Prostate gland (tissue), 2 donors: ENCODE measurements at regions of chr10 and their contacts with region 1.

Region 1: GRCh38 chr10:13787015-13787421 is 200.3 kb downstream of the PRPF18 start:
- DNase-seq: no peak
- H3K4me3 ChIP-seq: no peak overlapping the region
- H3K27ac ChIP-seq: peak overlapping the region in 1 of 2 donors; percentile 30
- H3K4me1 ChIP-seq: no peaks in the 10 kb centered on the region
- H3K27me3 ChIP-seq: no peaks in the 10 kb centered on the region
- CTCF ChIP-seq: no peak
- POLR2A ChIP-seq: no peak

Region 2: DNA sequence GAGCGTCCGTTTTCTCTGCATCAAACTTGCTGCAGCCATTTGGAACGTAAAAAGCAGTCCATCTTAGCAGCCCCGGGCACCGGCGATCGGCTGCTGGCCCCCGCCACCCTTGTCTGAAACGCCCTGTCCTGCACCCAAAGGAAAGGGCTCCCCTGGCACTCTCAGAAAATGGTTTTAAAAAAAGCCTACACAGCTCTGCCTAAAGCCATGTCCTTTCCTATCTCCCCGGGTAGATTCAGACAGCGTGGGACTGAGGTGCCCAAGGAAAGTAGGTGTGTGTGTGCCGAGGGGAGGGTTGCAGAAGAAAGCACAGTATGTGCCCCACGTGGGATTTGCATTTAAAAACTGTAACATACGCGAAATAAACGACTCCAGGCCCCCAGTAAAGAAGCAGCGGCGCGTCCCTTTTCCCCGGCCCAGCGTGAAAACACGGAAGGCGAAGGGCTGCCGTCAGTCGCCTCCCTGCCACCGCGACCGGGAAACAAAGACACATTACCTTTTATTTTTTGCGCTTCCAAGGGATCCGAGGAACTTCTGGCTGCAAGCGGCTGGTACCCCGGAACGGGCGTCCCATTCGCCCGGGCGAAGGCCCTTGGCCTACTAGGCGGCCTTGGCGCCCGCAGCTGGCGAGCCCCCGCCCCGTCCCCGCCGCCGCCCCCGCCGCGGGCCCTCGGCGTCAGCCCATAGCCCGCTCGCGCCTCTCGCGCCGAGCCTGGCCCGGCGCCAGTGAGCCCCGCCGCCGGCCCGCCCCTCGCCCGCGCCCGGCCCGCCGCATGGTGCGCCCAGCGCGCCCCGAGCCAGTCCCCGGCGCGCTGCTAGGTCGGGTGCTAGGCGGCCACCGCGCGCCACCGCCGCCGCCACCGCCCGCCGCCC is 104.3 kb after region 1 on chr10:
- intact Hi-C with region 1: loop called (anchors 5 kb)
- DNase-seq: no peak
- H3K4me3 ChIP-seq: peak overlapping the region; percentile 40 to 42
- H3K27ac ChIP-seq: peak overlapping the region; percentile 35 to 61
- H3K4me1 ChIP-seq: no peaks in the 10 kb centered on the region
- H3K27me3 ChIP-seq: no peaks in the 10 kb centered on the region
- CTCF ChIP-seq: no peak
- POLR2A ChIP-seq: no peak

Region 3: GRCh38 chr10:13956826-13957225 is 169.8 kb after region 1 on chr10:
- intact Hi-C with region 1: loop called (anchors 2 kb)
- DNase-seq: peak; percentile 8
- H3K4me3 ChIP-seq: no peak overlapping the region
- H3K27ac ChIP-seq: peak overlapping the region; percentile 30 to 36
- H3K4me1 ChIP-seq: no peaks in the 10 kb centered on the region
- H3K27me3 ChIP-seq: no peaks in the 10 kb centered on the region
- CTCF ChIP-seq: peak in 2 of 4 experiments; percentile 11 to 51
- POLR2A ChIP-seq: no peak

Region 4: DNA sequence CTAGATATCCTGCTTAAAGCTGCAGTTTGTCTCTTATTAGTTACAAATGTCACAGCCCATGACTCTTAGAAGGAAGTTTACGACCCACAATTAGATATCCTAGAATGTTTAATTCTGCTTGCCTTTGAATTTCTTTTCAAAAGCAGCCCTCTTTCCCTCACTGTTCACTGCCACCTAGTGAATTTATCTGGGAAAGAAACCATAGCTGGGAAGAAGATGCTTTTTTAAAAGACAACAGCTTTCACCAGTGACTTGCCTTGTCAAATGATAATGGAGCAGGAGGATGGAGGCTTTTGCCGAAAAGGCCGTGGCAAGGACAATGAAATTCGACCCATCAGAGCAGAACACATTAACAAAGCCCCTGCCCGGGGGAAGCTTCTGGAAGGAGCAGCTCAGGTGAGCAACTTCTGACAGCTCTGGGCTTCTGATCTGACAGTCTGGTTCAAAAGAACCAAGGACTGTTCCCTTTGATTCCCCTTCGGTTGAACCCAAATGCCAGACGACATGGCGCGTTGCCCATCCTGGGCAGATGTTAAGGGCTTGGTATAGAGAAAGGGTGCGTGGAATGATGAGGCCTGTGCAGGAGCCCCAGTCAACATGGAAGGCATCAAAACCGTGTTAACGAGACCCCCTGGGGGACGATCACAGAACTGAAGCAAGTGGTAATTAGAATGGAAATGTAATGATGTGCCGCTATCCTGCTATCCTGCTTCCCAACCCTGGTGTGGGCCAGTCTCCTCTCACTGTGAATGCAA is 306.9 kb after region 1 on chr10:
- intact Hi-C with region 1: loop called (anchors 2 kb)
- DNase-seq: no peak
- H3K4me3 ChIP-seq: no peak overlapping the region
- H3K27ac ChIP-seq: no peak overlapping the region
- H3K4me1 ChIP-seq: no peaks in the 10 kb centered on the region
- H3K27me3 ChIP-seq: no peaks in the 10 kb centered on the region
- CTCF ChIP-seq: peak; percentile 13 to 50 (median 37)
- POLR2A ChIP-seq: no peak

Region 5: GRCh38 chr10:14478604-14479003 is 691.6 kb after region 1 on chr10:
- intact Hi-C with region 1: loop called (anchors 10 kb)
- DNase-seq: peak; percentile 51
- H3K4me3 ChIP-seq: no peak overlapping the region
- H3K27ac ChIP-seq: no peak overlapping the region
- H3K4me1 ChIP-seq: no peaks in the 10 kb centered on the region
- H3K27me3 ChIP-seq: no peaks in the 10 kb centered on the region
- CTCF ChIP-seq: peak; percentile 29 to 64 (median 40)
- POLR2A ChIP-seq: no peak